ENCODE measurements at regions of chr9 and their contacts with region 1.

Region 1: GRCh38 chr9:38026021-38026809 is 42.8 kb downstream of the SHB start:
- DNase-seq: peak in 4 of 5 donors; percentile 49 to 63 (median 56)
- ATAC-seq: peak; percentile 76 to 80 (median 76)
- H3K4me3 ChIP-seq: no peak overlapping the region
- H3K27ac ChIP-seq: peak overlapping the region; percentile 48 to 85 (median 78)
- H3K4me1 ChIP-seq: peaks cover 3 to 67% (median 50%) of the 10 kb centered on the region in 12 donors
- H3K27me3 ChIP-seq: no peaks in the 10 kb centered on the region
- CTCF ChIP-seq: no peak
- POLR2A ChIP-seq: no peak

Region 2: DNA sequence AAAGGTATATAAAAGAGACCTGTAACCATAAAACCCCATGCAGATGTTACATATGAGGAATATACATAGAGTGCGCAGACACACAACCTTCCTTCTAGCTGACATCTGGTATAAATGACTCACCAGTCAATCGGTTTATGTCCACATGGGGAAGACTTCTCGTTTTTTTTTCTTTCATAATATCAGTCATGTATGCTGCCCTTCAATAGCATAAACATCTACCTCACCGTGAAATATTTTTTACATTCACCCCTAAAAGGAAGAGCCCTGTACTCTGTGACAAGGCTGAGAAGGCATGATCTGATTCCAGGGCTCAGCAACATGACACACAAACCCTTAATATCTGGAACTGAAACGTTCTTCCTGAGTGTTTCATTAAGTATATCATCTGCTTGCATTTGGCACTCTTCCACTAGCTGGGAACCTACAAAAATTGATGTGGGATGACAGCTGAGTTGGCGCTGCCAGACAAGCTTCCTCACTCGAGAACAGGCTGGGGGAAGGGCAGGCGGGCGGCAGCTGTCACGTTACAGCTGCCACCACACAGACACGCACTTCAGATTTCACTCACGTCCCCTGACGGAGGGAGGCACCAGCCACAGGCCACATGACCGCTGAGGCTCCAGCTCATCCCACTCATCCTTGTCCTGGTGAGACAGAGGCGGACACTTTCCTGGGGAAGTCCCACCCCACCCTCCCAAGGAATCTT is 31.4 kb before region 1 on chr9:
- intact Hi-C with region 1: loop called in 1 of 10 experiments (anchors 5 kb)
- DNase-seq: peak; percentile 84 to 92 (median 87)
- ATAC-seq: peak; percentile 90 to 91 (median 90)
- H3K4me3 ChIP-seq: peak overlapping the region in 6 of 12 donors; percentile 10 to 27 (median 17)
- H3K27ac ChIP-seq: peak overlapping the region in 11 of 12 donors; percentile 3 to 84 (median 52)
- H3K4me1 ChIP-seq: peaks cover 10 to 91% (median 75%) of the 10 kb centered on the region in 12 donors
- H3K27me3 ChIP-seq: no peaks in the 10 kb centered on the region
- CTCF ChIP-seq: no peak
- POLR2A ChIP-seq: no peak

Region 3: DNA sequence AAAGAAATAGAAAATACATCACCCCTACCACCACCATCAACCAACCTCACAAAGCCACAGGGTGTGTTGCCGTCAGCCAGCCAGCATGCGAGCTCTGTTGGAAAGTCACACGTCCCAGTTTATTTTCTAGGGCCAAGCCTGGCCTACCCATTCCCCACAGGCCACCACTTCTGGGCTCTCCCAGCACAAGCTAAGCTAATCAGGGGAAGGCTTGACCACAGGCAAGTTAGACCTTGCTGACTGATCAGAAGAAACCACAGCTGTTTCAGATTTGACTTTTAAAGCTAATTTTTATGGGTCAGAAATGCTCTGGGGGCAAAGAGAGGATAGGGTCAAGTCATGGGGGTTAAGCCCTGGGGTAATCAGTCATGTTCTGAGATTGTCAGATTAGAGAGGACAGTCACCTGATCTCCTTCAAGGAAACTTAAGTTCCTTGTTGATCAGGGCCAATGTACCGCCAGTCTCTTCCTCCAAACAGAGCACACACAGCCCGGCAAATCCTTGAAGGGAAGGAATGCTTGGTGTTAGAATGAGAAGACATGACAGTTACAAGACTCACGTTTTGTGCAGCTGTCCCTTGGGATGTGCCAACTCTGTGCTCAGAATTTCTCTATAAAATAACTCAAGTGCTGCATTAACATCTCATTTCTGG is 35.2 kb after region 1 on chr9:
- intact Hi-C with region 1: loop called in 3 of 10 experiments (anchors 5 kb)
- DNase-seq: no peak
- ATAC-seq: no peak
- H3K4me3 ChIP-seq: no peak overlapping the region
- H3K27ac ChIP-seq: peak overlapping the region in 10 of 12 donors; percentile 11 to 96 (median 62)
- H3K4me1 ChIP-seq: peaks cover 7 to 100% (median 77%) of the 10 kb centered on the region in 12 donors
- H3K27me3 ChIP-seq: no peaks in the 10 kb centered on the region
- CTCF ChIP-seq: no peak
- POLR2A ChIP-seq: no peak

Region 4: GRCh38 chr9:38141746-38142591 is 115.8 kb after region 1 on chr9:
- intact Hi-C with region 1: no loop called
- DNase-seq: no peak
- ATAC-seq: peak in 2 of 4 donors; percentile 30 to 59
- H3K4me3 ChIP-seq: no peak overlapping the region
- H3K27ac ChIP-seq: no peak overlapping the region
- H3K4me1 ChIP-seq: peaks cover 0 to 16% (median 9%) of the 10 kb centered on the region in 12 donors
- H3K27me3 ChIP-seq: peaks cover 0 to 8% (median 0%) of the 10 kb centered on the region in 9 donors
- CTCF ChIP-seq: no peak
- POLR2A ChIP-seq: no peak

Measured in heart left ventricle (tissue), 16 donors.